Activated B cell treated with CpG ODN at 0.5 μM for 24 hours (primary cell): ENCODE measurements at regions of chr7 and their contacts with region 1.

Region 1: DNA sequence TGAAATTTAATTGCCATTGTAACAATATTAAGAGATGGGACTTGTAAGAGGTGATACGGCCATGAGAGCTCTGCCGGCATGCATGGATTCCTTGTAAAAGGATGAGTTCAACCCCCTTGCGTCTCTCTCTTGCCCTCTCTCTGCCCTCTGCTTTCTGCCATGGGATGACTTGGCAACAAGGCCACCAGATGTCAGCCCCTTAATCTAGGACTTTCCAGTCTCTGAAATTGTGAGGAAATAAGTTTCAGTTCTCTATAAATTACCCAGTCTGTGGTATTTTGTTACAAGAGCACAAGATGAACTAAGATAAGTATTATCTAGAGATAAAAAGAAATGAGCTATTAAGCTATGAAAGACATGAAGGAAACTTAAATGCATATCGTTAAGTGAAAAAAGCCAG is 145.7 kb upstream of the AHR start:
- DNase-seq: no peak
- ATAC-seq: peak; percentile 86
- H3K4me3 Mint-ChIP-seq: peak overlapping the region; percentile 62
- H3K27ac Mint-ChIP-seq: peak overlapping the region; percentile 63
- H3K4me1 Mint-ChIP-seq: peaks cover 40% of the 10 kb centered on the region
- H3K27me3 Mint-ChIP-seq: no peaks in the 10 kb centered on the region
- CTCF ChIP-seq: no peak

Region 2: DNA sequence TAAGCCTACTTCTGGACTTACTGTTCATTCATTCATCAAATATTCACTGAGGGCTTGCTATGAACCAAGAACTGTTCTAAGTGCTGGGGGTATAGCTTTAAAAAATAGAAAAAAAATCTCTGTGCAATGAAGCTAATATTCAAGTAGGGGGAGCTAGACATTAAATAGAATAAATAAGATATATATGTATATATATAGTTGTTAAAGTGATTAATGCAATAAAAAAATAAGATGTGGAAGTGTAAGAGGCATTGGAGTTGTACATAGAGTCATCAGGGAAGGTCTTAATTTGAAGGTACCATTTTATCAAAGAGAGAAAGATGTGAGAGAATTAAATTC is 89.7 kb before region 1 on chr7:
- CTCF ChIA-PET with region 1: no interaction called
- POLR2A ChIA-PET with region 1: no interaction called
- intact Hi-C with region 1: loop called (anchors 5 kb)
- DNase-seq: no peak
- ATAC-seq: no peak
- H3K4me3 Mint-ChIP-seq: no peak overlapping the region
- H3K27ac Mint-ChIP-seq: no peak overlapping the region
- H3K4me1 Mint-ChIP-seq: peaks cover 14% of the 10 kb centered on the region
- H3K27me3 Mint-ChIP-seq: no peaks in the 10 kb centered on the region
- CTCF ChIP-seq: no peak

Region 3: DNA sequence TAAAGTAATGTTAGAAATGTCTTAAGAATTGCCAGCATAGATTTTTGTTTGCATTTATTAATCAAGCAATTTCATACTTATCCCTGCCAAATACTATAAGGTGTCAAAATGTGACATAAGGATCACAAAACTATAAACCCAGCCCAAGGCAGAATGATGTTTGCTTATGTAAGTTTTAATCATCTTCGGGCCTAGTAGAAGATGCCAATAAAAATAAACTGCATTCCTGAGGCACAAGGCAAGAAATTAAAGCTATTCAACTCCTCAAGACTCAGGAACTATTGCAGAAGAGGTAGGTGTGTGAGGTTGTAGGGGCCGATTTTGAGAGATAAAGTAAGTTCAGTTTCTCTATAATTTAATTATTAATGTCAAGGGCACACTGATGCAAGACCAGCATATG is 43.7 kb before region 1 on chr7:
- CTCF ChIA-PET with region 1: no interaction called
- POLR2A ChIA-PET with region 1: no interaction called
- intact Hi-C with region 1: no loop called
- DNase-seq: no peak
- ATAC-seq: no peak
- H3K4me3 Mint-ChIP-seq: no peak overlapping the region
- H3K27ac Mint-ChIP-seq: no peak overlapping the region
- H3K4me1 Mint-ChIP-seq: no peaks in the 10 kb centered on the region
- H3K27me3 Mint-ChIP-seq: no peaks in the 10 kb centered on the region
- CTCF ChIP-seq: no peak